Breast epithelium (tissue), 4 donors: ENCODE measurements at regions of chr13 and their contacts with region 1.

Region 1: DNA sequence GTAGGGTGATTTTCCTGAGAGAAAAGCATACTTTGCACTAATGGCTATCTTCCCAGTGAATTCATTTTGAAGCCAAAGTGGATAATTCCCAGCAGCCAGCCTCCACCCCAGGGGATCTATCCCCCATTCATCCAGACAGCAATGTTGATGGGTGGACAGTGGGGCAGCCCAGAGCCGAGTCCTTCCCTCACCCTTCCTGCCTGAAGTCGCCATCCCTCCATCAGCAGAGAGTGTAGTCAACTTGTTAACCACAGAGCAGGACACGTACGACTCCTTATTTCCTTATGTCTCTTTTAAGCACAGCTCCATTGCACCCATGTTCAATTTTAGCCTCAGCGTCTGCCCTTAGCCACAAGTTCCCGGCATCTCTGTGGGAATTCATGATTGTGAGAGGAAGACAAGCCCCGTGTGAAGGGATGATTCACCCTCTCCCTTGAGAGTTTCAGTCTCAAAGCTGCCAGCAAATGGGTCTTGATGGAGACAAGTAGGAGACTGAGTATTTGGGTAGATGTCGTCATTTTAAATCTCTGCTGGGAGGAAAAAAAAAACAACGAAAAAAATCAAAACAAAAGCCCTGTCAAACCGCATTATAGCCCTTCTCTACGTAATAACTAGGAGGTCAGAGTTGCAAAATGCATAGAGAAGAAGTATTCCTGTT is 58.3 kb upstream of the MEDAG start:
- DNase-seq: no peak
- H3K4me3 ChIP-seq: no peak overlapping the region
- H3K27ac ChIP-seq: peak overlapping the region in 1 of 2 donors; percentile 78
- H3K4me1 ChIP-seq: no peaks in the 10 kb centered on the region
- H3K27me3 ChIP-seq: no peaks in the 10 kb centered on the region
- CTCF ChIP-seq: no peak
- POLR2A ChIP-seq: no peak

Region 2: DNA sequence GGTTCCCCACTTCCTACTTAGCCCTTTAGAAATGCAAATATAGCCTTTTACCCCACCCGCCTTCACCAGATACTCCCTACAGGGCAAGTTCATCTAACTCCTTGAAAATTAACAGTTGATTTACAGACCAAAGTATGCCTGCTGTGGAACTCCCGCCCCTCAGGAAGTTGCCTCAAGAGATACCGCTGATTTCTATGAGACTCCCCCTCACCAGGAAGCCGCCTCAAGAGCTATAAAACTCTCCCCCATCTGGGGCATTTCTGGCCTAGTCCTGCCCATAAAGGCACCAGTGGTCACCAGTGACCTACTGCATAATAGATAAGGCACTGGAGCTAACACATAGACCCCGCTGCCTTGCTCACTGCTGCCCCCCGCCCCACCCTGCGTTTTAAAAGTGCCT is 795.7 kb before region 1 on chr13:
- intact Hi-C with region 1: no loop called
- DNase-seq: no peak
- H3K4me3 ChIP-seq: no peak overlapping the region
- H3K27ac ChIP-seq: no peak overlapping the region
- H3K4me1 ChIP-seq: no peaks in the 10 kb centered on the region
- H3K27me3 ChIP-seq: no peaks in the 10 kb centered on the region
- CTCF ChIP-seq: no peak
- POLR2A ChIP-seq: no peak

Region 3: DNA sequence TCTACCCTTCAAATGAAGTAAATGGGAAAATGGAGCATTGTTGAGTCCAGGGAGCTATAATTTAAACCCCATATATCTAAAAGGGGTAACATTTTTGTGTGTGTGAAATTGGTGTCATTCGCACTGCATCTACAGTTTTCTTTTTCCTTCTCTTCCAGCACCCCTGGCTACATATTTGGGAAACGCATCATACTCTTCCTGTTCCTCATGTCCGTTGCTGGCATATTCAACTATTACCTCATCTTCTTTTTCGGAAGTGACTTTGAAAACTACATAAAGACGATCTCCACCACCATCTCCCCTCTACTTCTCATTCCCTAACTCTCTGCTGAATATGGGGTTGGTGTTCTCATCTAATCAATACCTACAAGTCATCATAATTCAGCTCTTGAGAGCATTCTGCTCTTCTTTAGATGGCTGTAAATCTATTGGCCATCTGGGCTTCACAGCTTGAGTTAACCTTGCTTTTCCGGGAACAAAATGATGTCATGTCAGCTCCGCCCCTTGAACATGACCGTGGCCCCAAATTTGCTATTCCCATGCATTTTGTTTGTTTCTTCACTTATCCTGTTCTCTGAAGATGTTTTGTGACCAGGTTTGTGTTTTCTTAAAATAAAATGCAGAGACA is 83.9 kb before region 1 on chr13:
- intact Hi-C with region 1: loop called (anchors 2 kb)
- DNase-seq: no peak
- H3K4me3 ChIP-seq: no peak overlapping the region
- H3K27ac ChIP-seq: no peak overlapping the region
- H3K4me1 ChIP-seq: no peaks in the 10 kb centered on the region
- H3K27me3 ChIP-seq: no peaks in the 10 kb centered on the region
- CTCF ChIP-seq: no peak
- POLR2A ChIP-seq: no peak